Endothelial cell of umbilical vein (primary cell): ENCODE measurements at regions of chr9 and their contacts with region 1.

Region 1: GRCh38 chr9:137034863-137035761 is 3.2 kb upstream of the FUT7 start:
- DNase-seq: peak; percentile 82
- H3K4me3 ChIP-seq: no peak overlapping the region
- H3K27ac ChIP-seq: no peak overlapping the region
- H3K4me1 ChIP-seq: no peaks in the 10 kb centered on the region
- H3K27me3 ChIP-seq: no peaks in the 10 kb centered on the region
- CTCF ChIP-seq: peak; percentile 91 to 97
- POLR2A ChIP-seq: no peak

Region 2: GRCh38 chr9:136777359-136777758 is 257.8 kb before region 1 on chr9:
- CTCF ChIA-PET with region 1: interaction called, 17 read pairs
- POLR2A ChIA-PET with region 1: no interaction called
- dilution Hi-C with region 1: no loop called
- intact Hi-C with region 1: no loop called
- DNase-seq: no peak
- H3K4me3 ChIP-seq: no peak overlapping the region
- H3K27ac ChIP-seq: no peak overlapping the region
- H3K4me1 ChIP-seq: no peaks in the 10 kb centered on the region
- H3K27me3 ChIP-seq: peaks cover 14 to 24% of the 10 kb centered on the region in 2 experiments
- CTCF ChIP-seq: no peak
- POLR2A ChIP-seq: no peak

Region 3: DNA sequence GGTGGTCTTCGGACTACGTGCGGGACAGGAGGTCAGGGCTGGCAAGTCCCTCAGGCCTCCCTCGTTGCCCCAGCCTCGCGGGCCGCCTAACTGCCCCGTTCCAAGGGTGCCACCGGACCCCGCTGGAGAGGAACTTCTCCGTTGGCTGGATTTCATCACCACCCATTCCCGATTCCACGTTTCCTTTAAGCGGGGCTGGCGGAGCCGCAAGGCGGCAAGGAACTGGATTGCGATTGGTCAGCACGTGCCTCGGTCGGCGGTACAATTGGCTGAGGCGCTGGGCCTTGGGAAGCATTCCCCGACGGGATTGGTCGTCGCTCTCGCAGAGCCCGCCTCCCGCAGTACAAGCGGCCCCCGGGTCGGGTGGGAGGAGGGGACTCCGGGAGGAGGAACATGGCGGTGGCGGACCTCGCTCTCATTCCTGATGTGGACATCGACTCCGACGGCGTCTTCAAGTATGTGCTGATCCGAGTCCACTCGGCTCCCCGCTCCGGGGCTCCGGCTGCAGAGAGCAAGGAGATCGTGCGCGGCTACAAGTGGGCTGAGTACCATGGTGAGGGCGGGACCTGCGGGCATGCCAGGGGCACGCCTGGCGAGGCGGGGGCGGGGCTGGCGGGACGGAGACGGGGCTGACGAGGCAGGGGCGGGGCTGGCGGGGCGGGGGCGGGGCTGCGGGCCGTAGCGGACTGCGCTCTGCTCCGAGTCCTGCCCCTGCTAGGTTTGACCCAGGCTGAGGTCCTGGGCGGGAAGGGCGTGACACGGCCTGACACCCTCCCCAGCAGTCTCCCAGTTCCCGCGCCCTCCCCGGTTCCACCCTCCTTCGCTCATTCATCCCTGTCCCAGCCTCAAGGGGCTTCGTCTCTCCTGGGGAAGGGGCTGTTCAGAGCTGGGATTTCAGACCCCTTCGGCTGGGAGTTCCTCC is 185.8 kb before region 1 on chr9 and contains the start of gene PHPT1:
- CTCF ChIA-PET with region 1: interaction called, 18 read pairs
- POLR2A ChIA-PET with region 1: no interaction called
- dilution Hi-C with region 1: no loop called
- intact Hi-C with region 1: no loop called
- DNase-seq: peak; percentile 99
- H3K4me3 ChIP-seq: peak within 1 kb of the TSS; percentile 29 to 90 (median 54)
- H3K27ac ChIP-seq: no peak within 1 kb of the TSS
- H3K4me1 ChIP-seq: peaks cover 10% of the 10 kb centered on the region
- H3K27me3 ChIP-seq: peaks cover 8 to 23% of the 10 kb centered on the region in 2 experiments
- CTCF ChIP-seq: no peak
- POLR2A ChIP-seq: peak; percentile 97
- total RNA-seq, gene PHPT1: 139 and 165 TPM in 2 replicates

Region 4: GRCh38 chr9:137021979-137022619 is 13.0 kb before region 1 on chr9:
- CTCF ChIA-PET with region 1: interaction called, 17 read pairs
- POLR2A ChIA-PET with region 1: no interaction called
- dilution Hi-C with region 1: no loop called
- intact Hi-C with region 1: no loop called
- DNase-seq: peak; percentile 61
- H3K4me3 ChIP-seq: no peak overlapping the region
- H3K27ac ChIP-seq: no peak overlapping the region
- H3K4me1 ChIP-seq: peaks cover under 1% of the 10 kb centered on the region
- H3K27me3 ChIP-seq: no peaks in the 10 kb centered on the region
- CTCF ChIP-seq: no peak
- POLR2A ChIP-seq: no peak

Region 5: GRCh38 chr9:137055385-137056364 is 20.6 kb after region 1 on chr9:
- CTCF ChIA-PET with region 1: interaction called, 10 read pairs
- POLR2A ChIA-PET with region 1: no interaction called
- dilution Hi-C with region 1: no loop called
- intact Hi-C with region 1: no loop called
- DNase-seq: no peak
- H3K4me3 ChIP-seq: no peak overlapping the region
- H3K27ac ChIP-seq: no peak overlapping the region
- H3K4me1 ChIP-seq: no peaks in the 10 kb centered on the region
- H3K27me3 ChIP-seq: peaks cover 8 to 17% of the 10 kb centered on the region in 2 experiments
- CTCF ChIP-seq: no peak
- POLR2A ChIP-seq: no peak